ENCODE measurements at regions of chr9 and their contacts with region 1.

Region 1: GRCh38 chr9:134267881-134268724 is 58.2 kb upstream of the RXRA start:
- DNase-seq: peak in 2 of 3 donors; percentile 80 to 83
- H3K4me3 ChIP-seq: peak overlapping the region in 4 of 7 experiments; percentile 6 to 49 (median 36)
- H3K27ac ChIP-seq: peak overlapping the region; percentile 20 to 45
- H3K4me1 ChIP-seq: peaks cover 0 to 59% (median 46%) of the 10 kb centered on the region in 4 experiments
- H3K27me3 ChIP-seq: no peaks in the 10 kb centered on the region

Region 2: GRCh38 chr9:133269537-133270362 is 998.4 kb before region 1 on chr9:
- CTCF ChIA-PET with region 1: no interaction called
- POLR2A ChIA-PET with region 1: no interaction called
- DNase-seq: no peak
- H3K4me3 ChIP-seq: peak overlapping the region in 2 of 7 experiments; percentile 4 to 13
- H3K27ac ChIP-seq: peak overlapping the region; percentile 40 to 58
- H3K4me1 ChIP-seq: peaks cover 6 to 67% (median 29%) of the 10 kb centered on the region in 4 experiments
- H3K27me3 ChIP-seq: peaks cover 0 to 5% (median 0%) of the 10 kb centered on the region in 5 experiments

Region 3: DNA sequence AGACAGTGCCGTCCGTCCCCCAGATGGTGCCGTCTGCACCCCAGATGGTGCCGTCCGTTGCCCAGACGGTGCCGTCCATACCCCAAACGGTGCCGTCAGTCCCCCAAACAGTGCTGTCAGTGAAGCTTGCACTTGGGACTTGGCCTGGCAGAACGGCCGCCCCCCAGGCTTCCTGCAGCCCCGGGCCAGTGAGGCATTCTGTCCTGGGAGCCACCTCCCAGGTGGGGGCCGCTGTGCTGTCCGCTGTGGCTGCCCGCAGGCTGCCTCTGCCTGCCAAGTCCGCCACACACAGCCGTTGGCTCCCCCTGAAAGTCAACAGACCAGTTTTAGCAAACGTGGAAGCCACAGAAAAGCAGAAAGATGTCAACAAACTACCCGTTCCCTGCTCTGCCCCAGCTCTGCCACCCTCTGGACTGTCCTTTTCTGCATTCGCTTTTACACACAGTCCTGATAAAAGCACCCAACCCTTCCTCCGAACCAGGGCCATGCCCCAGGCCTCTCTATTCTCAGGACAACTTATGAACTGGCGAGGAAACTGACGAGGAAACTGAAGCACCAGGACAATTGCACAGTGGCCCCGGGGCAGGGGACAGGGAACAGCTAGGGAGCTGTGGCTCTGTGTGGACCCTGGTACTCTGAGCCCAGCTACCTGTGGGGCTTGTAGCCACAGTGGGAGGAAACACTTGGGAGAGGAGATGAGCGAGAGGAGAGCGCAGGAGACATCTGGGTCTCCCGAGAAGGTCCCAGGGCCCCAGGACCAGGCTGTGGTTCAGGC is 18.6 kb after region 1 on chr9:
- CTCF ChIA-PET with region 1: interaction called, 21 read pairs
- POLR2A ChIA-PET with region 1: interaction called, 16 read pairs
- DNase-seq: peak; percentile 43 to 67 (median 63)
- H3K4me3 ChIP-seq: peak overlapping the region in 5 of 7 experiments; percentile 13 to 61 (median 38)
- H3K27ac ChIP-seq: peak overlapping the region in 1 of 2 experiments; percentile 63
- H3K4me1 ChIP-seq: peaks cover 1 to 61% (median 39%) of the 10 kb centered on the region in 4 experiments
- H3K27me3 ChIP-seq: no peaks in the 10 kb centered on the region

Measured in common myeloid progenitor, CD34-positive (primary cell).